Activated B cell treated with CpG ODN at 0.5 μM for 24 hours (primary cell): ENCODE measurements at regions of chr1 and their contacts with region 1.

Region 1: GRCh38 chr1:204431310-204432165 is 19.9 kb upstream of the PPP1R15B start:
- DNase-seq: peak; percentile 70
- ATAC-seq: peak; percentile 87
- H3K4me3 Mint-ChIP-seq: no peak overlapping the region
- H3K27ac Mint-ChIP-seq: peak overlapping the region; percentile 41
- H3K4me1 Mint-ChIP-seq: peaks cover 5% of the 10 kb centered on the region
- H3K27me3 Mint-ChIP-seq: no peaks in the 10 kb centered on the region
- CTCF ChIP-seq: peak; percentile 40

Region 2: DNA sequence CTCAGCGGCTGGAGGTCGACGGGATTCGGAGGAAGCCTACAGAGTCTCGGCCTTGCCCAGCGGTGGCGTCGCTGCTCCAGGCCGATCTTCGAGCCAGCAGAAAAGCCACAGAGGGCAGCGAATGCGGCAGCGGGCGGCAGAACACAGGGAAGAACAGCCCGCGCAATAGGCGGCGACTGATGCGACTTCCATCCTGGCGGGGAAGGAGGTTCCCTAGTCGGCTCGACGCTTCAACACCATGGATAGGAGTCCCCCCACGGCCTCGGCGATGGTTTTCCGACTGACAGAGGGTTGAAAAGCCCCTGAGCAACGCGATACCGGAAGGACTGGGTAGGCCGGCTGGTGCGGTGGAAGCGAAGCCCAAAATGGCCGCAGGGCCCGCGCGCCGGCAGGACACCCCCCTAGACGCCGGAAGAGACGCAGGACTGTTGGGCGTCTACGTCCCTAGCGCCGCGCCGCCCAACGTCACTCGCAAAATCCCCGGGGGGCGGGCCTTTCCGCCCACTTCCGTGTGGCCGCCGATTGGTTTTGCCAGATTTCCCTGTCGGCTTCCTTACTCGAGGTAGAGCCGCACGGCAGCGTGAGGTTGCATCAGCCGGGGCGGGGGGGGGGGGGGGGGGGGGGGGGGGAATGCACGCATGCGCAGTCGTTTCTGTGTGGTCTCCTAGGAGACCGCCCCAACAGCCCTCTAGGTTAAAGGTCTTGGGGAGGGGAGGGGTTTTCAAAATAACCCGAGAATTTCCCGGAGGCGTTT is 19.9 kb before region 1 on chr1 and contains the start of gene PPP1R15B:
- CTCF ChIA-PET with region 1: interaction called, 24 read pairs
- POLR2A ChIA-PET with region 1: interaction called, 5 read pairs
- intact Hi-C with region 1: loop called (anchors 2 kb)
- DNase-seq: peak; percentile 96
- ATAC-seq: peak; percentile 89
- H3K4me3 Mint-ChIP-seq: peak within 1 kb of the TSS; percentile 99
- H3K27ac Mint-ChIP-seq: peak within 1 kb of the TSS; percentile 99
- H3K4me1 Mint-ChIP-seq: peaks cover 29% of the 10 kb centered on the region
- H3K27me3 Mint-ChIP-seq: no peaks in the 10 kb centered on the region
- CTCF ChIP-seq: no peak
- total RNA-seq, gene PPP1R15B: 60.4 and 70.6 TPM in 2 replicates

Region 3: GRCh38 chr1:204417231-204417997 is 14.1 kb before region 1 on chr1:
- CTCF ChIA-PET with region 1: interaction called, 24 read pairs
- POLR2A ChIA-PET with region 1: interaction called, 9 read pairs
- intact Hi-C with region 1: loop called (anchors 2 kb)
- DNase-seq: no peak
- ATAC-seq: peak; percentile 27
- H3K4me3 Mint-ChIP-seq: peak overlapping the region; percentile 39
- H3K27ac Mint-ChIP-seq: peak overlapping the region; percentile 84
- H3K4me1 Mint-ChIP-seq: peaks cover 61% of the 10 kb centered on the region
- H3K27me3 Mint-ChIP-seq: no peaks in the 10 kb centered on the region
- CTCF ChIP-seq: no peak